ENCODE measurements at regions of chr1 and their contacts with region 1.

Region 1: GRCh38 chr1:26993237-26994019 is at the start of gene TRNP1:
- DNase-seq: peak; percentile 81
- H3K4me3 Mint-ChIP-seq: peak within 1 kb of the TSS; percentile 80
- H3K27ac Mint-ChIP-seq: peak within 1 kb of the TSS; percentile 92
- H3K4me1 Mint-ChIP-seq: peaks cover 45% of the 10 kb centered on the region
- H3K27me3 Mint-ChIP-seq: no peaks in the 10 kb centered on the region
- CTCF ChIP-seq: no peak
- total RNA-seq, gene TRNP1: 56.3 and 59.2 TPM in 2 replicates

Region 2: GRCh38 chr1:25912076-25912831 is 1081.2 kb before region 1 on chr1:
- CTCF ChIA-PET with region 1: no interaction called
- POLR2A ChIA-PET with region 1: no interaction called
- intact Hi-C with region 1: no loop called
- DNase-seq: no peak
- H3K4me3 Mint-ChIP-seq: no peak overlapping the region
- H3K27ac Mint-ChIP-seq: no peak overlapping the region
- H3K4me1 Mint-ChIP-seq: peaks cover 7% of the 10 kb centered on the region
- H3K27me3 Mint-ChIP-seq: no peaks in the 10 kb centered on the region
- CTCF ChIP-seq: no peak

Region 3: DNA sequence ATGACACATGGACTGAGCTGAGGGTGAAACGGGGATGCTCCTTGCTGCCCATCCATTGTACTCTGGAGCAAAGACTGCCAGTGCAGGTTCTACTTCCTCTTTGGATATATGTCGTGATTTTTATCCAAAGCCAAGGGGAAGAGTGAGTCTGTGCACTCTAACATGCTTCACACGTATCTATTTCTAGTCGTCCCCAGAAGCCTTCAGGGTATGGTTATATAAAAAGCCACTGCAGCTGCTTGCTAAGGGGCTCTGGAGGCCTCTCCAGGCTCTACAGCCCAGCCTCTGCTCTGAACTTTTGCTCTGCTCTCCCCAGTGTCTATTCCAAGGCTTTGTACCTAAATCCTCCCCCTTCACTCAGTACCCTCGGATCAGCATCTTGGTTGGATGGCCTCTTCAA is 1015.6 kb before region 1 on chr1:
- CTCF ChIA-PET with region 1: no interaction called
- POLR2A ChIA-PET with region 1: no interaction called
- intact Hi-C with region 1: no loop called
- DNase-seq: no peak
- H3K4me3 Mint-ChIP-seq: no peak overlapping the region
- H3K27ac Mint-ChIP-seq: no peak overlapping the region
- H3K4me1 Mint-ChIP-seq: no peaks in the 10 kb centered on the region
- H3K27me3 Mint-ChIP-seq: no peaks in the 10 kb centered on the region
- CTCF ChIP-seq: no peak

Region 4: DNA sequence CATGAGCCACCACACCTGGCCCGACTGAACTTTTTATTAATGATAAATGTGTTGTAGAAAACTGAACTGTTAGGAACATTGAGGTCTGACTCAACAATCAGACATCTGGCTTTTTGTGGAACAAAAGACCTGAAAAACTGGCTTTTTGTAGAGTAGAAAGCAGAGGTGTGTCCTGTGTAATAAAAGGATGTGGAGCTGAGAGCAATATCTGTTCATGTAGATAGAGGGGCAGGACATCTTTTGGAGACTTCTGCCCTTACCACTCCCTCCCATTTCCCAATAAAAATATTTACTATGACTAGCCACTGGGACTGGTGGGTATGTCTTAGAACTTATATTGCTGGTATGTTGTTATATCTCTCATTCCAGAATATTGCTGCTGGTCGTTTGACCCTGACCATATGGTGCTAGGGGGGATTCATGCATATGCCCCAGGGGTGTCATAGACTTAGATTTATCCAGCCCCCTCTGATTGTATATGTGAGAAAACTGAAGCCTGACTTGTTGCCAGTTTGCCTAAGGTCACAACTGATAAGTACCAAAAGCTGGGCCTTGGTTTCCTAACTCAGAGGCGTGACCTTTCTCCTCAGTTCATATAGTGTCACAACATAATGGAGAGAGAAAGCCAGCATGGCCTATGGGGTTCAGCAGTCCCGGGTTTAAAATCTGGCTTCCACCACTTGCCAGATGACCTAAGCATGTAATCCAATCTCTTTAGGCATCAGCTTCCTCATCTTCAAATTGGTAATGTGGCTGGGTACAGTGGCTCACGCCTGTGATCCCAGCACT is 239.1 kb before region 1 on chr1:
- CTCF ChIA-PET with region 1: no interaction called
- POLR2A ChIA-PET with region 1: no interaction called
- intact Hi-C with region 1: no loop called
- DNase-seq: no peak
- H3K4me3 Mint-ChIP-seq: no peak overlapping the region
- H3K27ac Mint-ChIP-seq: no peak overlapping the region
- H3K4me1 Mint-ChIP-seq: peaks cover 5% of the 10 kb centered on the region
- H3K27me3 Mint-ChIP-seq: no peaks in the 10 kb centered on the region
- CTCF ChIP-seq: no peak

Region 5: GRCh38 chr1:26965213-26965612 is 28.2 kb before region 1 on chr1:
- CTCF ChIA-PET with region 1: interaction called, 72 read pairs
- POLR2A ChIA-PET with region 1: interaction called, 160 read pairs
- intact Hi-C with region 1: loop called (anchors 1 kb)
- DNase-seq: no peak
- H3K4me3 Mint-ChIP-seq: no peak overlapping the region
- H3K27ac Mint-ChIP-seq: no peak overlapping the region
- H3K4me1 Mint-ChIP-seq: peaks cover 37% of the 10 kb centered on the region
- H3K27me3 Mint-ChIP-seq: no peaks in the 10 kb centered on the region
- CTCF ChIP-seq: no peak

Measured in MCF 10A (cell line).